ENCODE measurements at regions of chr10 and their contacts with region 1.

Region 1: DNA sequence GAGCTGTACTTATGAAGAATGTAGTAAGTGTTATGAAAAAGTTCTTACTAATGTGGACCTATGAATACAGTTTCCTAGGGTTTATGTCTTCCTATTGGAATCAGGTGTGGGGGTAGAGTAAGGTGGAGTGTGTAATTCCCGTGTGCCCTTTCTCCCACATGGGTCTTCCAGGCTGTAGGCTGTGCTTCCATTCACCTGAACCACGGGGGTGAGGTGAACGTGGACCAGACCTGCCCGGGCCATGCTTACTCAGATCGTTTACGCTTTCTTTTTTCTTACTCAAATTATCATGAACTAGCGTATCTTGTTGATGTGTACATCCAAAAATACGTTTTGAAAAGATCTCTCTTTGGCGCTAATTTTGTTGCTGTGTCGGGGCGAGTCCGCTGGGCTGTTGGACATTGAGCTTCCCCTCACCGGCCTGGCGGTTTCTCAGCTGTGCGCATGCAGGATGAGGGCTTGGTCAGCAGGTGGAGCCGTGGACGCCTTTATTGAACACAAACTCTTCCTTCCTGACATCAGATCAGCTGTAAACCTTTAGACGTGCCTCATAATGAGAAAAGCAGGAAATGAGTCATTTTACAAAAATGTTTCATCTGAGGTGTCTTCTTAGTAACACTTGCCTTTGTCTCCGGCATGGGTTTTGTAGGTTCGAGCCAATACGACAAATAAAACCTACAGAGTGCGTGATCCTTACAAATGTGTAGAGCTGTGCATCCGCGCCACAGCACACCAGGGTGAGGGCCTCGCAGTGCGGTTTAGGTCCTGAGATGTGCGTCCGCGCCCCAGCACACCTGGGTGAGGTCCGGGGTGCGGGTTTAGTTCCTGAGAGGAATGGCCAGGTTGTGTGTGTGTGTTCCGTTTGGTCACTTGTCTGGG is 53.8 kb downstream of the WDR37 start:
- DNase-seq: peak; percentile 87
- ATAC-seq: peak; percentile 98
- H3K4me3 Mint-ChIP-seq: peak overlapping the region; percentile 35
- H3K27ac Mint-ChIP-seq: peak overlapping the region; percentile 89
- H3K4me1 Mint-ChIP-seq: peaks cover 33% of the 10 kb centered on the region
- H3K27me3 Mint-ChIP-seq: no peaks in the 10 kb centered on the region

Region 2: DNA sequence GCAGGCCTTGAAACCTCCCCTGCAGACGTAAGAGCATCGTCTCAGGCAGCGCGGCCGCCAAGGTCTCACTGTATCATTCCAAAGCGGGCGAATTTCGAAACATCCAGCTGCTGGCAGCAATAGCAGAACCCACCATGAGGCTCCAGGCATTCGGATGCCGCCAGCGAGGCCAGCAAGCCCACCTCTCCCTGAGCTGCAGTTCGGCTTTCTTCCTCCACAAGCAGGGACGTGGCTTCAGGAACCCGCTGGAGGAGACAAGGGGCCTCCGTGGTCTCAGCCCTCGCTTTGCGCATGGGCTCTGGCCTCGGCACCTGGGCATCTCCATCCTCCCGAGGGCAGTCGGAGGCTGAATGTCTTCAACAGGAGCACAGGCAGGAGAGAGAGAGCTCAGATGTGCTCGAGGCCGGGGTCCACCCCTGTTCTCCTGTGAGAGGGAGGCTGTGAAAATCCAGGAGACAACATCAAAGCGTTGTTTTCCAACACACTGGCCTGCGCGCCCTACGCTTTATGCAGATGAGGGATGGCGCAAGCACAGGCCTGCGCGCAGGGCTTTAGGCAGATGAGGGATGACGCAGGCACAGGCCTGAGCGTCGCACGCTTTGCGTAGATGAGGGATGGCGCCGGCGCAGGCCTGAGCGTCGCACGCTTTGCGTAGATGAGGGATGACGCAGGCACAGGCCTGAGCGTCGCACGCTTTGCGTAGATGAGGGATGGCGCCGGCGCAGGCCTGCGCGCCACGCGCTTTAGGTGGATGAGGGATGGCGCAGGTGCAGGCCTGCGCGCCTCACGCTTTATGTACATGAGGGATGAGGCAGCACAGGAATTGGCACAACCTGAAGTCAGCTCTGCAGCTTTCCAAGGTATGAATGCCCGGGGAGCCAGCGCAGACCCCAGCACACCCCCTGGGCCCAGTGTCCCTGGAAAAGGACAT is 49.4 kb after region 1 on chr10:
- CTCF ChIA-PET with region 1: no interaction called
- POLR2A ChIA-PET with region 1: no interaction called
- DNase-seq: no peak
- ATAC-seq: peak; percentile 44
- H3K4me3 Mint-ChIP-seq: peak overlapping the region; percentile 31
- H3K27ac Mint-ChIP-seq: peak overlapping the region; percentile 49
- H3K4me1 Mint-ChIP-seq: peaks cover 4% of the 10 kb centered on the region
- H3K27me3 Mint-ChIP-seq: peaks cover 10% of the 10 kb centered on the region

Region 3: GRCh38 chr10:1368842-1369171 is 258.8 kb after region 1 on chr10:
- CTCF ChIA-PET with region 1: interaction called, 12 read pairs
- POLR2A ChIA-PET with region 1: no interaction called
- DNase-seq: peak; percentile 49
- ATAC-seq: peak; percentile 69
- H3K4me3 Mint-ChIP-seq: no peak overlapping the region
- H3K27ac Mint-ChIP-seq: no peak overlapping the region
- H3K4me1 Mint-ChIP-seq: no peaks in the 10 kb centered on the region
- H3K27me3 Mint-ChIP-seq: peaks cover 11% of the 10 kb centered on the region

Measured in activated CD8-positive, alpha-beta T cell treated with anti-CD3 and anti-CD28 coated beads, Interleukin-2, amount 10 ng/mL, durations not matched to agents 7 days and 5 days (primary cell).